PC-9 (cell line): ENCODE measurements at regions of chr3 and their contacts with region 1.

Region 1: DNA sequence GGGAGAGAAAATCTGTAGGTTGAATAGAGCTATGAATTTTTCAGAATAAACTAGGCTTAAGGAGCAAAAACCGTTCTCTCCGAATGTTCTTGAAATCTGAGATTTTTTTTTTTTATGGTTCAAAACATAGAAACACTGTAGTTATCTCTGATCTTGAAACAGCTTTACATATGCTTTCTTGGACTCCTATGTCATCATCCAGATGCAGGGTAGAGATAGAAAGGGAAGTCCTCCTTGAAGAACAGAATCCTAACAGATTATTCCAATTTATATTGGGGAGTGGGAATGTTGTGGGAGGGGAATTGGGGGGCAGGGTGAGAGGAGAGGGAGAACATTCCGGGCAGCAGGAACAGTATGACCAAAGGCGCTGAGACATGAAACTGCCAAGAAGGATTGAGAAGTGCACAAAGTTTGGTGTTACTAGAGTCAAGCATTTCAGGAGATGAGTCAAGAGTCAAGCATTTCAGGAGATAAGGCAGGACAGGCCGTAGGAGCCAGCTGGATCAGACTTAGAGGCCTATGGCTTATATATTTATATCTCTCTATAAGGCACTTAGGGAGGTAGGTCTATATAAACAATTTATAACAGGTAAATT is 21.9 kb upstream of the ST3GAL6 start:
- DNase-seq: peak; percentile 38 to 57
- H3K4me3 ChIP-seq: no peak overlapping the region
- H3K27ac ChIP-seq: no peak overlapping the region
- H3K4me1 ChIP-seq: peaks cover 13% of the 10 kb centered on the region
- H3K27me3 ChIP-seq: no peaks in the 10 kb centered on the region
- CTCF ChIP-seq: no peak

Region 2: GRCh38 chr3:98395101-98395500 is 346.1 kb before region 1 on chr3:
- CTCF ChIA-PET with region 1: no interaction called
- POLR2A ChIA-PET with region 1: no interaction called
- intact Hi-C with region 1: no loop called
- DNase-seq: no peak
- H3K4me3 ChIP-seq: no peak overlapping the region
- H3K27ac ChIP-seq: no peak overlapping the region
- H3K4me1 ChIP-seq: no peaks in the 10 kb centered on the region
- H3K27me3 ChIP-seq: no peaks in the 10 kb centered on the region
- CTCF ChIP-seq: no peak

Region 3: DNA sequence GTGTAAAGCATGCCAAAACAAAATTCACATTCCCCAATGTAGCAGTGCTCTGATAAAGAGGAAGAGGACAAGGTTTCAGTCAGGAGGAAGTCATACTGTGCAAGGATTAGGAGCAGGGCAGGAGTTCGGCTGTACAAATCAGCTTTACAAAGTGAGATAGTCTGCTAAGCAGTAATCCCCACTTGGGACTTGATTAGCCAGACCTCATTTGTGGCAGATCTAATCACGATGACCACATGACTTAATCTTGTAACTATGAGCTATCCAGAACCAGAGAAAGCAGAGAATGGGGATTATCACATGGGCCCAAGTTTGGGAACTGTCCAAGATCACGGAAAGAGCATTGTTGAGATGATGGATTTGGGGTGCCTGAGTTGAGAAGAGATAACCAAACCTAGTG is 152.5 kb after region 1 on chr3:
- CTCF ChIA-PET with region 1: no interaction called
- POLR2A ChIA-PET with region 1: interaction called, 12 read pairs
- intact Hi-C with region 1: no loop called
- DNase-seq: no peak
- H3K4me3 ChIP-seq: no peak overlapping the region
- H3K27ac ChIP-seq: 0 out of 2 replicates have a peak overlapping the region, but pooled peaks have one; percentile 1
- H3K4me1 ChIP-seq: peaks cover 40% of the 10 kb centered on the region
- H3K27me3 ChIP-seq: no peaks in the 10 kb centered on the region
- CTCF ChIP-seq: no peak